Activated naive CD4-positive, alpha-beta T cell treated with anti-CD3 and anti-CD28 coated beads for 36 hours (primary cell): ENCODE measurements at regions of chr1 and their contacts with region 1.

Region 1: DNA sequence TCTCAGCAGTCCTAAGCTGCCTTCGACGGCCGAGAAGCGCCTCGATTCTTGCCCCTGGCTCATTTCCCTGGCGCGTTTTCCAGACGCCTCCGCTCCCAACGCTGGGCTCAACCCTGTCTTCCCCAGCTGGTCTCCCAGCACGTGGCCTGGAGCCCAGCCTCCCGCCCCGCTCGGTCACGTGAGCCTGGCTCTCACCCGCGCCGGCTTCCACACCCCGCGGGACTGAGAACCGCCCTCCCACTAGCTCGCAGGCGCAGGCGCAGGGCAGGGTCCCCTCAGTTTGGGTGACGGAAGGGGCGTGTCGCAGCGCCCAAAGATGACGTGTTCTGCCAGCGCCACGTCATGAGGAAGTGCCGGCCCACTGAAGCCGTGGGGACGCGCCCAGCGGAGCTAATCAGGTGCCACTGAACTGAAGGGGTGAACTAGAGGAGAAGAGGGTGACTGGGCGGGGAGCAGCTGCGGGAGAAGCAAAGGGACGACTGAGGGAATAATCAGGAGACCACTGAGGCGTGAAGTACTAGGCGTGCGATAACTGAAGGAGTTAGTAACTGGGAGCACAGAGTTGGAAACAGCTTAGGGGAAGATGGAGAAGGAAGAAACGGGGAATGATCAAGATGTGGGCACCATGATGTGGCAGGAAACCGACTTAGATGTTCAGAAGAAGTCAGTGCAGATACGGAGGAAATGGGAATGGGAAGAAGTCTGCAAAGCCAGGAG is at the start of gene DHDDS:
- DNase-seq: peak; percentile 99
- H3K4me3 Mint-ChIP-seq: peak within 1 kb of the TSS; percentile 93
- H3K27ac Mint-ChIP-seq: peak within 1 kb of the TSS; percentile 80
- H3K4me1 Mint-ChIP-seq: peaks cover 26% of the 10 kb centered on the region
- H3K27me3 Mint-ChIP-seq: no peaks in the 10 kb centered on the region
- total RNA-seq, gene DHDDS: 26.2 to 26.3 TPM

Region 2: DNA sequence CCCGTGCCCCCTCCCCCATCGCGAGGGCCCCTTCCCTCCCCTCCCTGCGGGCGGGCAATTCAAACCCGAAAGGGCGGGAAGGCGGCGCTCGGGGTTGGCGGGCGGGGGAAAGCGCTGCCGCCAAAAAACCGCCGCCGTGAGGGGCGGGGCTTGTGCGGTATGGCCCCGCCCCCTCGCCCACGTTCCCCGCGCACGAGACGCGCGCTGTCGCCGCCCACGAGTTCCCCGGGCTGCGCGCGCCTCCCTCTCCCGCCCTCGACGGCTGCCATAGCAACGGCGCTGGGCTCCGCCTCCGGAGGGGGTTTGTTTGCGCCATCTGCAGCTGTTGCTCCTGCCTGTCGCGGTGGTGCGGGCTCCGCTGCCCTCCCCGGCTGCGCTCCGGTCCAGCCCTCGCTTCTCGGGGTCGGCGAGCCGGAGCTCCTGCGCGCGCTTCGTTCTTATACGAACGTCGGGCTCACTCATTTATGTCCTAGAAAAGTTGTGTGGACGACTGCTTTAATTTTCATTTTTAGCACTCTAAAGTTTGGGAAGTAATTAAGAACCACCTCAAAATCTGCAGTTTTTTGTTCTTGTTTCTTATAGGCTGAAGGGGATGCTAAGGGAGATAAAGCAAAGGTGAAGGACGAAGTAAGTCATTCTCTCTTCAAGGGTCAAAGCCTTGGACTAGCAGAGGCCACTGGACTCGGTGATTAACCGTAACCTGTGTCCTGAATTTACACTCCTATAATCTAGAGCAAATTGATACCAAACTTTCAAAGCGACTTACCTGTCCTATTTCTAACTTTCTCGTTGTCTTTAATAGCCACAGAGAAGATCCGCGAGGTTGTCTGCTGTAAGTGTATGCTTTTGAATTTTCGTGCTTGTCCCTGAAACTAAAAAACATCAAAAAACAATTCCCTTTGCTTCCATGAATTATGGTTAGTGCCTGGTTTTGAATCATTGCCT is 41.0 kb after region 1 on chr1:
- CTCF ChIA-PET with region 1: no interaction called
- intact Hi-C with region 1: loop called (anchors 1 kb)
- DNase-seq: peak; percentile 96
- H3K4me3 Mint-ChIP-seq: peak overlapping the region; percentile 87
- H3K27ac Mint-ChIP-seq: peak overlapping the region; percentile 71
- H3K4me1 Mint-ChIP-seq: peaks cover 49% of the 10 kb centered on the region
- H3K27me3 Mint-ChIP-seq: no peaks in the 10 kb centered on the region